WTC11 (cell line): ENCODE measurements at regions of chr6 and their contacts with region 1.

Region 1: DNA sequence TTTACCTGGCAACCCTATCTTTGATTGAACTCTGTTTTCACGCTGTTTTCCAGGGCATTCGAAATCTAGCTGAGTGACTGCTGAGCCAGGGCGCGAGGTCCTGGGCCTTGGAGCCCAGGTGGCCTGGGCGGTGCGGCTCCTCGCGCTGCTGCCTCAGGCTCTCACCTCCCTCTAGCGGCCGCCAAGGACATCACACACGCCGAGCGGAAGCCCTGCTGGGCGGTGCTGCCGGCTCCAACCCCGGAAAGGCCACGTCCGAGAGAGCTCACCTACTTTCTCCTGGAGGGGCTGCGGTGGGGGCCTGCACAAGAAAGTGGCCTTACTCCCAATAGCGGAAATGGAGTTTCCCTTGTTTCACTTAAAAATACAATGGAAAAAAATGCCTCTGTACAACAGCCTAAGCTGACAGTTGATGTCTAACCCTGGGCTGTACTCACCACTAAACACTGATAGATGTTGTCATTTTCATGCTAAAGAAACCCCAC is 77.7 kb downstream of the ELOVL4 start:
- DNase-seq: peak; percentile 87
- ATAC-seq: peak; percentile 95
- H3K4me3 Mint-ChIP-seq: peak overlapping the region; percentile 28; the same call in 1 of the 2 replicates
- H3K27ac Mint-ChIP-seq: no peak overlapping the region
- H3K4me1 Mint-ChIP-seq: peaks cover 25% of the 10 kb centered on the region
- H3K27me3 Mint-ChIP-seq: no peaks in the 10 kb centered on the region; the same call in 1 of the 2 replicates
- CTCF ChIP-seq: peak; percentile 91

Region 2: DNA sequence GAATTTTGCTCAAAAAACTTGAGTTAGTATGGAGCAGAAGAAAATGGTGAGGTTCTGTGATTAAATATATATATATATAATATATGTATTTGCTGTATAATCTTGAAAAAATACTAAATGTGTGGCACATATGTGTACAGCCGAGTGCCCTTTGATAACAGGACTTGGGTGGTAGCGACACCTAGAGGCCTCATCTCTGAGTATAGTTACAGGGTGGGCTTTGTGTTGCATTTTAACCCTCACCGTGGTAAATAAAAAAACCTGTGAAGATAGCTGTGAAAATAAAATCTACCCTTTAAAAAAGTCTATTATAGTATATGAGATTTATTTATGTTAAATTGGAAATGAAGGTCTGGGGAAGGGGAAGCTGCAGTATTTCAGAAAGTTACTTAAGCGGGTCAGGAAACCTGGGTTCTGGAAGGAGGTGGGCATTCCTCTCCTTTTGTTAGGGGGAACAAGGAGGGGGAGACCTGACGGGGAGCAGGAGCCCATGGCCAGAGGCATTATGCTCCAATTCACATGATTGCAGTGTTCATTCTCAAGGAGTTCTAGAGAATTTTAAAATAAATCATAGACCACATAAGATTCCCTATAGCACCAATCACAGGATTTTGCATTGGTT is 155.8 kb before region 1 on chr6:
- CTCF ChIA-PET with region 1: interaction called, 18 read pairs
- POLR2A ChIA-PET with region 1: no interaction called
- DNase-seq: peak; percentile 54
- ATAC-seq: peak; percentile 81
- H3K4me3 Mint-ChIP-seq: no peak overlapping the region
- H3K27ac Mint-ChIP-seq: no peak overlapping the region
- H3K4me1 Mint-ChIP-seq: peaks cover 11% of the 10 kb centered on the region
- H3K27me3 Mint-ChIP-seq: no peaks in the 10 kb centered on the region; the same call in 1 of the 2 replicates
- CTCF ChIP-seq: peak; percentile 52; the same call in 1 of the 2 replicates

Region 3: DNA sequence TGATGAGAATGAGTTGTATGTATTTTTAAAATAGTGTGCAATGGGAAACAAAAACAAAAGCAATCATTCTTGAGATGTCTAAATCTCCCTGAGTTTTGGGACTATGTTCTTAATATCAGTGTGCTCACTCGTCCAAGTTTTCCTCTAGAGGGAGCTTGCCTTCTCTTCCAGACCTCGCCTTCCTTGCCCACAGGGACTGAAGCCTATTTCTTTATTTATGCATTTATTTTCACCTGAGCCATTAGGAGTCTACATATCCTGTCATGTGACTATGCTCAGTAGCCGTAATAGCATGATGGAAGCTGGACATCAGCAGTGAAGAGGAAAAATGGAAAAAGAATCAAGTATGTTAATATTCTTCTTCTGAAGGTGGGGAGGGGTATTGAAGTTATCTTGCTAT is 107.3 kb before region 1 on chr6:
- CTCF ChIA-PET with region 1: interaction called, 23 read pairs
- POLR2A ChIA-PET with region 1: no interaction called
- DNase-seq: no peak
- ATAC-seq: peak; percentile 80
- H3K4me3 Mint-ChIP-seq: no peak overlapping the region
- H3K27ac Mint-ChIP-seq: no peak overlapping the region
- H3K4me1 Mint-ChIP-seq: no peaks in the 10 kb centered on the region
- H3K27me3 Mint-ChIP-seq: no peaks in the 10 kb centered on the region
- CTCF ChIP-seq: no peak

Region 4: GRCh38 chr6:79789843-79790242 is 79.8 kb before region 1 on chr6:
- CTCF ChIA-PET with region 1: interaction called, 22 read pairs
- POLR2A ChIA-PET with region 1: interaction called, 3 read pairs
- DNase-seq: no peak
- ATAC-seq: no peak
- H3K4me3 Mint-ChIP-seq: no peak overlapping the region
- H3K27ac Mint-ChIP-seq: no peak overlapping the region
- H3K4me1 Mint-ChIP-seq: no peaks in the 10 kb centered on the region
- H3K27me3 Mint-ChIP-seq: no peaks in the 10 kb centered on the region; the same call in 1 of the 2 replicates
- CTCF ChIP-seq: no peak

Region 5: DNA sequence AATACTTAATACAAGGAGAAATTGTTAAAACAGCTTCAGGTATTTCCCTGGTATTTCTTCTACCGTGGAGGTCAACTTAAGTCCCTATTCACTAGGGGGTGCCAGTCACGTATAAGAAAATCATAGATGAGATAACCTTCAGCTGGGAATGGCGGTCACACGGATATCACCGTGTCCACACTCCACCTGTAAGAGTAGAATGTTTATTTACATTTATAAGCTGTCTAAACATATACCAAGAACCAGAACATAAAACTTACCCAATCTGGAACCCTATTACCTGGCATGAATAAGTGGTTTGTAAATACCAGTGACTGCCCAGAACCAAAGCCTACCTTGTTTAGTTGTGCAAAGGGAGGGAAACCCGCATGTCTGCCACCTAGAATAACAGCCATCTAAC is 79.6 kb after region 1 on chr6:
- CTCF ChIA-PET with region 1: interaction called, 19 read pairs
- POLR2A ChIA-PET with region 1: no interaction called
- DNase-seq: peak; percentile 72
- ATAC-seq: 0 out of 2 replicates have a peak, but pooled peaks have one; percentile 6
- H3K4me3 Mint-ChIP-seq: peak overlapping the region; percentile 43
- H3K27ac Mint-ChIP-seq: no peak overlapping the region
- H3K4me1 Mint-ChIP-seq: peaks cover 27% of the 10 kb centered on the region
- H3K27me3 Mint-ChIP-seq: peaks cover 8% of the 10 kb centered on the region
- CTCF ChIP-seq: peak; percentile 64

Region 6: DNA sequence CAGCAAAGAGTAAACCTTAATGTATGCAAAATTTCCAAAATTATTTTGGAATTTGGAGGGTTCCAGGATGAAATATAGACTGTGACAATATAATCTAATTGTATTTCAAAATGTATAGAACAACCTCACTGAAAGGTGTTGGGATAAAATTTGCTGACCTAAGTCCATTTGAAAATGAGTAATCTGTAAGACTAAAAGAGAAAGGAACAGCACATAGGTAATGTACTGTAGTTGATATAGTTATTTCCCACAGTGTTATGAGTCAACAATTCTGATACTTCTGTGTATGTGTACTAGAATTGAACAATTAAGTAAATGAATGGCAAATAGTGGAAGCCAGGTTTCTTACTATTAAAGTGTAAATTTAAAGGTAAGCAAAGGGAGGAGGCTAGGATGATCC is 101.6 kb after region 1 on chr6:
- CTCF ChIA-PET with region 1: no interaction called
- POLR2A ChIA-PET with region 1: no interaction called
- DNase-seq: no peak
- ATAC-seq: no peak
- H3K4me3 Mint-ChIP-seq: no peak overlapping the region
- H3K27ac Mint-ChIP-seq: no peak overlapping the region
- H3K4me1 Mint-ChIP-seq: no peaks in the 10 kb centered on the region
- H3K27me3 Mint-ChIP-seq: no peaks in the 10 kb centered on the region
- CTCF ChIP-seq: no peak

Region 7: GRCh38 chr6:79984261-79984660 is 114.6 kb after region 1 on chr6:
- CTCF ChIA-PET with region 1: no interaction called
- POLR2A ChIA-PET with region 1: no interaction called
- DNase-seq: no peak
- ATAC-seq: peak; percentile 90
- H3K4me3 Mint-ChIP-seq: no peak overlapping the region
- H3K27ac Mint-ChIP-seq: no peak overlapping the region
- H3K4me1 Mint-ChIP-seq: no peaks in the 10 kb centered on the region
- H3K27me3 Mint-ChIP-seq: no peaks in the 10 kb centered on the region; the same call in 1 of the 2 replicates
- CTCF ChIP-seq: no peak